Colonic mucosa (tissue), 4 donors: ENCODE measurements at regions of chr2 and their contacts with region 1.

Region 1: GRCh38 chr2:20635675-20636584 is 15.0 kb downstream of the HS1BP3 start:
- DNase-seq: peak; percentile 87
- H3K4me3 ChIP-seq: no peak overlapping the region
- H3K27ac ChIP-seq: no peak overlapping the region
- H3K4me1 ChIP-seq: peaks cover 20% of the 10 kb centered on the region
- H3K27me3 ChIP-seq: no peaks in the 10 kb centered on the region
- CTCF ChIP-seq: peak; percentile 80

Region 2: GRCh38 chr2:20398956-20399567 is 236.9 kb before region 1 on chr2:
- intact Hi-C with region 1: loop called (anchors 5 kb)
- DNase-seq: no peak
- H3K4me3 ChIP-seq: no peak overlapping the region
- H3K27ac ChIP-seq: no peak overlapping the region
- H3K4me1 ChIP-seq: no peaks in the 10 kb centered on the region
- H3K27me3 ChIP-seq: no peaks in the 10 kb centered on the region
- CTCF ChIP-seq: no peak

Region 3: GRCh38 chr2:20443276-20443920 is 192.5 kb before region 1 on chr2:
- intact Hi-C with region 1: loop called (anchors 2 kb)
- DNase-seq: peak; percentile 52
- H3K4me3 ChIP-seq: no peak overlapping the region
- H3K27ac ChIP-seq: peak overlapping the region; percentile 63
- H3K4me1 ChIP-seq: peaks cover 5% of the 10 kb centered on the region
- H3K27me3 ChIP-seq: no peaks in the 10 kb centered on the region
- CTCF ChIP-seq: peak; percentile 50

Region 4: DNA sequence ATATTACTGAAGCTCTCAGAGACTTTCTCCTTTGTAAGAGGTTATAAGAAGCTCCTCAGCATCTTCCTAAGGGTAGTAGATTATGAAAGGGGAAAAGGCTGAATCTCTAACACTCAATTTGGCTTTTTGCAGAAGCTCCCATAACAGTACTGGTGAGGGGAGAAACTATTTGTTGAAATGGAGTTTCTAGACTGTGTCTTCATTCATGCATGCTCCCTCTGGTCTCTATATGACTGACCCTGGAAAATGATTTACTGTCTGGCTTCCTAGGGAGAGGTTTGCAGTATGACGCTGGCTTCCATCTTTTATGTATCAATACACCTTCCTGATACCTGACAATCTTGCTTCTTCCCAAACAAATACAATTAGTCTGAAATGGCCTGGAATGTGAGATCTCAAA is 123.1 kb after region 1 on chr2:
- intact Hi-C with region 1: no loop called
- DNase-seq: no peak
- H3K4me3 ChIP-seq: no peak overlapping the region
- H3K27ac ChIP-seq: no peak overlapping the region
- H3K4me1 ChIP-seq: no peaks in the 10 kb centered on the region
- H3K27me3 ChIP-seq: no peaks in the 10 kb centered on the region
- CTCF ChIP-seq: no peak